Activated naive CD4-positive, alpha-beta T cell treated with anti-CD3 and anti-CD28 coated beads for 36 hours (primary cell): ENCODE measurements at regions of chr16 and their contacts with region 1.

Region 1: GRCh38 chr16:71205482-71206131 is 24.9 kb downstream of the HYDIN start:
- DNase-seq: no peak
- H3K4me3 Mint-ChIP-seq: no peak overlapping the region
- H3K27ac Mint-ChIP-seq: no peak overlapping the region
- H3K4me1 Mint-ChIP-seq: no peaks in the 10 kb centered on the region
- H3K27me3 Mint-ChIP-seq: peaks cover 36% of the 10 kb centered on the region

Region 2: GRCh38 chr16:71282943-71283342 is 77.3 kb after region 1 on chr16:
- CTCF ChIA-PET with region 1: no interaction called
- intact Hi-C with region 1: no loop called
- DNase-seq: no peak
- H3K4me3 Mint-ChIP-seq: no peak overlapping the region
- H3K27ac Mint-ChIP-seq: no peak overlapping the region
- H3K4me1 Mint-ChIP-seq: peaks cover 7% of the 10 kb centered on the region
- H3K27me3 Mint-ChIP-seq: no peaks in the 10 kb centered on the region

Region 3: DNA sequence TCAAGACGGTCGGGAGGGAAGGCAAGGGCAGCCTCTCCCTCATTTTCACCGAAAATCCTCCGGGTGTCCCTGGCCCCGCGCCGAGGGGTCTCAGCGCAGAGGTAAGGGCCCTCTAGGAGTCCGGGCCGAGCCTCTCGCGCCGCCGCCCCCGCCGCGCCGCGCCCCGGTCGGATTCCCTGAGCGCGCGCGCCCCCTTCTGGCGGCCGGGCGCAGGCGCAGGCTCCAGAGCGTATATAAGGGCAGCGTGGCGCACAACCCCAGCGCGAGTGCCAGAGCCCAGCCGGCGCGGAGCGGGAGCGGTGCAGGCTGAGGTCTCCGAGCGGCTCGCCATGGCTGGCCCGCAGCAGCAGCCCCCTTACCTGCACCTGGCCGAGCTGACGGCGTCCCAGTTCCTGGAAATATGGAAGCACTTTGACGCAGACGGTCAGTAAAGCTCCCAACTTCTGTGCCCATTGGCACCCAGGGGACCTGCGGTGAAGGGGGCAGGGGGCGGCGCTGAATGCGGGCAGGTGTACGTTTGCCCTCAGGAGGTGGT is 152.9 kb after region 1 on chr16 and contains the start of gene CALB2:
- CTCF ChIA-PET with region 1: no interaction called
- intact Hi-C with region 1: loop called (anchors 5 kb)
- DNase-seq: peak; percentile 62
- H3K4me3 Mint-ChIP-seq: no peak within 1 kb of the TSS
- H3K27ac Mint-ChIP-seq: no peak within 1 kb of the TSS
- H3K4me1 Mint-ChIP-seq: peaks cover 3% of the 10 kb centered on the region
- H3K27me3 Mint-ChIP-seq: peaks cover 23% of the 10 kb centered on the region
- total RNA-seq, gene CALB2: not detected